MCF 10A (cell line): ENCODE measurements at regions of chr3 and their contacts with region 1.

Region 1: DNA sequence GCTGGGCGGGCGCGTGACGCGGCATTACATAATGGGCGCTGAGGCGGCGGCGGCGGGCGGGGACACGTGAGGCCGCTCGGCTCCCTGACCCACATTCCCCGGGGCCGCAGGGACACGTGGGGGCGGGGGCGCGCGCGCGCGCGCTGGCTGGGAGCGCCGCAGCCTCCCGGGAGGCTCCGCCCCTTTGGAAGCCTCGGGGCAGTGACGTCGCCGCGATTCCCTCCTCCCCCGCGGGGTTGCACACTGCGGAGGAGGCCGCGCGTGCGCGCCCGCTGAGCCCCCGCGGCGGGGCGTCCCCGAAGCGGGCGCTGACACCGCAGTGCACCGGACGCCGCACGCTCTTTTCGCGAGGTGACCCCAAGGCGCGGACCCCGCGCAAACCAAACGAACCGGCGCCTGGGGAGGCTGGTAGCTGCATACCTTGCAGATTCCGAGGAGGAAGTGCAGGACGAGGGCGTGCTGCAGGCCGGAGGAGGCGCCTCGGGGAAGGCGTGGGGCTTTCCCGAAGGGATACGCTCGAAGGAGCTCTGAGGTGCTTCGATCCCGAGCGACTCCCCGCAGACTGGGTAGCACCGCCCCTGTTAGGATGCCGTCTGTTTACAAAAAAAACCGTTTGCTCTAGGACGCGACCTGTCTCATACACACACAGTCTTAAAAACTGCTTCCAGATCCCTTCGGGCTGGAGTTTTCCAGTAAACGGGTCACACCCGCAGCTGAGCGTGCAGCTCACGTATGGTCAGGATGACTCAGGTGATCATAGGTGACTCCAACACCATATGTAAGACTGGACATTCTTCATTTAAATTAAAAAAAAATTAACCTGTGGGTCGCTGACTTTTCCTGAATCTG is 1.0 kb downstream of the NR1D2 start:
- DNase-seq: peak; percentile 94
- H3K4me3 Mint-ChIP-seq: peak overlapping the region; percentile 73
- H3K27ac Mint-ChIP-seq: peak overlapping the region; percentile 88
- H3K4me1 Mint-ChIP-seq: peaks cover 27% of the 10 kb centered on the region
- H3K27me3 Mint-ChIP-seq: no peaks in the 10 kb centered on the region
- CTCF ChIP-seq: no peak

Region 2: GRCh38 chr3:23676093-23676492 is 270.0 kb before region 1 on chr3:
- CTCF ChIA-PET with region 1: no interaction called
- POLR2A ChIA-PET with region 1: no interaction called
- intact Hi-C with region 1: no loop called
- DNase-seq: no peak
- H3K4me3 Mint-ChIP-seq: no peak overlapping the region
- H3K27ac Mint-ChIP-seq: no peak overlapping the region
- H3K4me1 Mint-ChIP-seq: no peaks in the 10 kb centered on the region
- H3K27me3 Mint-ChIP-seq: no peaks in the 10 kb centered on the region
- CTCF ChIP-seq: no peak

Region 3: GRCh38 chr3:23888617-23889228 is 57.4 kb before region 1 on chr3:
- CTCF ChIA-PET with region 1: interaction called, 3 read pairs
- POLR2A ChIA-PET with region 1: interaction called, 4 read pairs
- intact Hi-C with region 1: loop called (anchors 5 kb)
- DNase-seq: peak; percentile 35
- H3K4me3 Mint-ChIP-seq: no peak overlapping the region
- H3K27ac Mint-ChIP-seq: no peak overlapping the region
- H3K4me1 Mint-ChIP-seq: peaks cover 6% of the 10 kb centered on the region
- H3K27me3 Mint-ChIP-seq: no peaks in the 10 kb centered on the region
- CTCF ChIP-seq: peak; percentile 72

Region 4: GRCh38 chr3:23900744-23901143 is 45.4 kb before region 1 on chr3:
- CTCF ChIA-PET with region 1: no interaction called
- POLR2A ChIA-PET with region 1: no interaction called
- intact Hi-C with region 1: no loop called
- DNase-seq: peak; percentile 77
- H3K4me3 Mint-ChIP-seq: no peak overlapping the region
- H3K27ac Mint-ChIP-seq: no peak overlapping the region
- H3K4me1 Mint-ChIP-seq: peaks cover 16% of the 10 kb centered on the region
- H3K27me3 Mint-ChIP-seq: no peaks in the 10 kb centered on the region
- CTCF ChIP-seq: no peak

Region 5: DNA sequence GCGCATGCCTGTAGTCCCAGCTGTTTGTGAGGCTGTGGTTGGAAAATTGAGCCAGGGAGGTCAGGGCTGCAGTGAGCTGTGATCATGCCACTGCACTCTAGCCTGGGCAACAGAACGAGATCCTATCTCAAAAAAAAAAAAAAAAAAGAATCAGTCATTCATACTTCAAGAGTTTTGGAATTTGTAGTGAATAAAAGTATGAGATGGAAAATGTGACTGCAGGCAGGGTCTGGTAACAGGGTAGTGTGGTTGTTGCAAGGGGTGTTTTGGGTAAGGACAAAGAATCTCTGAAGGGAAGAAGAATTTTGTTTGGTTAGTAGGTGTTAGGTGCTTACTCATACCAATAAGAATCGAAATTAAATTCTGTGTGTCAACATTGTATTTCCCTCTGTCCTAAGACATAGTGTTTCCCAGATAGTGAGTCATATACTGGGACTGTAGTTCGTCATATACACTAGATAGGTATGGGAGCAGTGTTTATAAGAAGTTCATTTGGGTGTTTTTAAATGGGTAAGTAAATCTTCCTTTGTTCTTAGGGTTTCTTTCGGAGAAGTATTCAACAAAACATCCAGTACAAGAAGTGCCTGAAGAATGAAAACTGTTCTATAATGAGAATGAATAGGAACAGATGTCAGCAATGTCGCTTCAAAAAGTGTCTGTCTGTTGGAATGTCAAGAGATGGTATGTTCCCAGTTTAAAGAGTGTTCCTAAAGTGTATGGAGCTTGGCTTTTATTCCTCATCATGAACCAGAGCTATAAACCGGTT is 13.2 kb after region 1 on chr3:
- CTCF ChIA-PET with region 1: interaction called, 5 read pairs
- POLR2A ChIA-PET with region 1: interaction called, 112 read pairs
- intact Hi-C with region 1: loop called (anchors 1 kb)
- DNase-seq: peak; percentile 88
- H3K4me3 Mint-ChIP-seq: peak overlapping the region; percentile 20
- H3K27ac Mint-ChIP-seq: peak overlapping the region; percentile 61
- H3K4me1 Mint-ChIP-seq: peaks cover 14% of the 10 kb centered on the region
- H3K27me3 Mint-ChIP-seq: no peaks in the 10 kb centered on the region
- CTCF ChIP-seq: no peak

Region 6: DNA sequence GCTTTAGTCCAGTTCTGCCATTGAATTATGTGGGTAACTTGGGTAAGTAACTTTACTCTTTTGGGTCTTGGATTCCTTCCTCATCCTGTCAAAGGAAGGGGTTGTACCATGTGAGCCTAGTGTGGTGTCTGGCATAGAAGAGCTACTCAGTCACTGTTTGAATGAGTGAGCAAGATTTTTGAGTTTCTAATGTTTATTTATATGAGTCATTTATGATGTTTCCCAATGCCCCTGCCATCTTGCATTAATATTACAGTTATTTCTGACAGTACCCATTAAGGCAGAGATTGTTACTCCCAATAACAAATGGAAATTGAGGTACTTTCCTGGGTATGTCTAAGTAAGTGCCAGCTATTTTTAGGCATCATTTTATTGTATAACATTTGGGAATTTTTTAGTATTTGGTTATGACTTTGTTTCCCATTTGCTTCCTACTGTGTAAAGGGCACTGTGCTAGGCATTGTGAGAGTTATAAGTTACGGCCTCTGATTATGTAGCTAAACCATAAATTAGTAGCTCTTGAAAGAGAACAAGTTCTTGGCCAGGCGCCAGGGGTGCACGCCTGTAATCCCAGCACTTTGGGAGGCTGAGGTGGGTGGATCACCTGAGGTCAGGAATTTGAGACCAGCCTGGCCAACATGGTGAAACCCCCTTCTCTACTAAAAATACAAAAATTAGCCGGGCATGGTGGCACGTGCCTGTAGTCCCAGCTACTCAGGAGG is 22.5 kb after region 1 on chr3:
- CTCF ChIA-PET with region 1: interaction called, 4 read pairs
- POLR2A ChIA-PET with region 1: interaction called, 112 read pairs
- intact Hi-C with region 1: no loop called
- DNase-seq: peak; percentile 87
- H3K4me3 Mint-ChIP-seq: peak overlapping the region; percentile 1
- H3K27ac Mint-ChIP-seq: peak overlapping the region; percentile 69
- H3K4me1 Mint-ChIP-seq: peaks cover 29% of the 10 kb centered on the region
- H3K27me3 Mint-ChIP-seq: no peaks in the 10 kb centered on the region
- CTCF ChIP-seq: no peak